Activated T-helper 2 cell treated with anti-CD3 and anti-CD28 coated beads, Interferon-gamma antibody, Interleukin-2, Interleukin-4, amounts not matched to agents 10 μg/mL and 5 μg/mL and 100 μg/mL, durations not matched to agents 14 hours and 24 hours and 36 hours (primary cell): ENCODE measurements at regions of chr5 and their contacts with region 1.

Region 1: DNA sequence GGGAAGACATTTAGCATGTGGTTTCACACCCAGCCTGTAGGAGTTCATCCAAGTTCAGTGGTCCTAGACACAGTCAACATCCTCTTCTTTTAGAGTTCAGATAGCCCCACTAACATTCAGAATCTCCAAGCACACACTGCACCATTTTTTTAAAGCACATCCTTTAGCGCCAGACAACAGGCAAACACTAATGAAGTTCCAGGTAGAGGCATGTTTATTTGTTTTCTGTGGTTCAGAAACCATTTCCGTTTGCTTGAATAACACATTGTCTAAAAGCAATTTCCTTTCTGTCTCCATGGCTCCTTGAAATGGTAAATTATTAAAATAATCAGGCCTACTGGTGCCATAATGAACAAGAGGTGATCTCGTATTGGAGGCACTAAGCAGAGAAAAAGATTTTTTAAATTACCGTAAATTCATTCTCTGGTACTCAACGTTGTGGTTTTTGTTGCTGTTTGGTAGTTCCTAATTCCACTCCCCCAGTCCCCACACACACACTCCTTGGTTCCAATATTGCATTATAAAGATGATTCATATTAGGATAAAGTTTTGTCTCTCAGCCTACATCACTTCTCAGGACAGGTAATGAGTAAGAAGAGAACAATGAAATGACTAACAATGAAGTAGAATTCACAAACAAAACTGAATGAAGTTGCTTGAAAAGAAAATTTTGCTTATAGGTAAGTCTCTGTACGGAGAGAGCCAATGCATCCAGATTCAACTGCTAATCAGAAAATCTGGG is 153.1 kb downstream of the PCSK1 start:
- DNase-seq: no peak
- H3K4me3 Mint-ChIP-seq: no peak overlapping the region
- H3K27ac Mint-ChIP-seq: peak overlapping the region; percentile 47
- H3K4me1 Mint-ChIP-seq: peaks cover 25% of the 10 kb centered on the region
- H3K27me3 Mint-ChIP-seq: peaks cover 2% of the 10 kb centered on the region

Region 2: GRCh38 chr5:94693043-94693822 is 1586.7 kb before region 1 on chr5:
- intact Hi-C with region 1: no loop called
- DNase-seq: no peak
- H3K4me3 Mint-ChIP-seq: no peak overlapping the region
- H3K27ac Mint-ChIP-seq: no peak overlapping the region
- H3K4me1 Mint-ChIP-seq: no peaks in the 10 kb centered on the region
- H3K27me3 Mint-ChIP-seq: no peaks in the 10 kb centered on the region

Region 3: DNA sequence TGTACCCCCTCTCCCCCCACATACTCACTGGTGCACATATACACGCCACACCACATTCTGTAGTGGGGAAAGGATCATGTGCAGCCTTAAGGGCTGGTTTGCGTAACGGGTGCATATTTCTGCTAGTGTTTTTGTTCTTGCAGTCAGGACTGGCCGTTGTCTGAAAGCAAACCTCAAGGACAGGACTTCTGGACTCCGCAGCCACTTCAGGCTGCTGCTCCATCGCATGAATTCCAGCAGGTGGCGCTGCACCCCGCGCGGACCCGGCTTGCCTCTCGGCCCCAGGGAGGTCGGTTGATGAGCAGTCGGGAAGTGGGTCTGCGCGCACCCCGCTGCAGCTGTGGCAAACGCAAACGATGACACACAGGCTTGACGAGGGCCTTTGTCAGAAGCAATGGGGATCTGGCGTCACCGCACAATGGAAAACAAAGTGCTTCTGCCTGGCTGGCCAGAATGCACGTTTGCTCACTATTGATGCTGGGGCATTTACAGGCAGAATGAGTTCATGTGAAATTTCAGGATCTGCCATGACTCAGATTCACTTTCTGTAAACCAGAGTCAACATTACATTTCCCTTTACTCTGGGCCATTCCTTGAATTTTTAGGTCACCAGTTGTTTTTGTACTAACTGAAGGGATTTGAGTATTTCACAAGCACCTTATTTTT is 421.2 kb before region 1 on chr5:
- intact Hi-C with region 1: loop called (anchors 2 kb)
- DNase-seq: peak; percentile 84
- H3K4me3 Mint-ChIP-seq: peak overlapping the region; percentile 38
- H3K27ac Mint-ChIP-seq: peak overlapping the region; percentile 80
- H3K4me1 Mint-ChIP-seq: peaks cover 52% of the 10 kb centered on the region
- H3K27me3 Mint-ChIP-seq: no peaks in the 10 kb centered on the region

Region 4: GRCh38 chr5:96079075-96079474 is 200.9 kb before region 1 on chr5:
- intact Hi-C with region 1: loop called (anchors 2 kb)
- DNase-seq: no peak
- H3K4me3 Mint-ChIP-seq: no peak overlapping the region
- H3K27ac Mint-ChIP-seq: peak overlapping the region; percentile 76
- H3K4me1 Mint-ChIP-seq: peaks cover 64% of the 10 kb centered on the region
- H3K27me3 Mint-ChIP-seq: no peaks in the 10 kb centered on the region

Region 5: GRCh38 chr5:96259151-96259772 is 20.7 kb before region 1 on chr5:
- intact Hi-C with region 1: loop called (anchors 2 kb)
- DNase-seq: no peak
- H3K4me3 Mint-ChIP-seq: no peak overlapping the region
- H3K27ac Mint-ChIP-seq: no peak overlapping the region
- H3K4me1 Mint-ChIP-seq: peaks cover 8% of the 10 kb centered on the region
- H3K27me3 Mint-ChIP-seq: peaks cover 5% of the 10 kb centered on the region